ENCODE measurements at regions of chr17 and their contacts with region 1.

Region 1: GRCh38 chr17:48441231-48441711 is 11.3 kb upstream of the SKAP1 start:
- DNase-seq: peak; percentile 96
- H3K4me3 ChIP-seq: peak overlapping the region; percentile 11
- H3K27ac ChIP-seq: peak overlapping the region; percentile 75
- H3K4me1 ChIP-seq: peaks cover 55% of the 10 kb centered on the region
- H3K27me3 ChIP-seq: no peaks in the 10 kb centered on the region
- CTCF ChIP-seq: no peak

Region 2: DNA sequence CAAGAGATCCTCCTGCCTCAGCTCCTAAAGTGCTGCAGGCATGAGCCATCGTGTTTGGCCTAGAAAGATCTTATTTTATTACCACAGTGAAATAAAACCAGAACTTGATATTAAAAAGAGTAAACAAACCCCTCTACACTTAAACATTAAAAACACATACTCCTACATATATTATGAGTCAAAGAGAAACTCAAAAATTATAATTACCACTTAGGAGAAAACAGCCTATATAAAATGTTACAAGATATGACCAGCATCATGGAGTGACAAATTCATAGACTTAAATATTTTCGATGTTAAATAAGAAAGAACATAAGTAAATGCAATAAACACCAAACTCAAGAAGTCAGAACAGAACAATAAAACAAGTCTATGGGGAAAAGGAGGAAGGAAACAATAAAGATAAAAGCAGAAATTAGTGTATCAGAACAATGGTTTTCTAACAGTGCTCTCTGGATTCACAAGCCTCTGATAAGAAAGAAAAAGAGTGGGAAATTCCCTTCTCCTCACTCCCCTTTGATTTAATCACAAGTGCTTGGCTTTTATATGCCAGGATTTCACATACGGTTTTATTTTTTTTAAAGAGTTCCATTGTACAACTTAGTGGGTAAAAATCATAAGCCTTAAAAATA is 34.2 kb before region 1 on chr17:
- CTCF ChIA-PET with region 1: no interaction called
- POLR2A ChIA-PET with region 1: no interaction called
- intact Hi-C with region 1: loop called (anchors 5 kb)
- DNase-seq: peak; percentile 84
- H3K4me3 ChIP-seq: no peak overlapping the region
- H3K27ac ChIP-seq: peak overlapping the region; percentile 22
- H3K4me1 ChIP-seq: peaks cover 10% of the 10 kb centered on the region
- H3K27me3 ChIP-seq: no peaks in the 10 kb centered on the region
- CTCF ChIP-seq: no peak

Region 3: DNA sequence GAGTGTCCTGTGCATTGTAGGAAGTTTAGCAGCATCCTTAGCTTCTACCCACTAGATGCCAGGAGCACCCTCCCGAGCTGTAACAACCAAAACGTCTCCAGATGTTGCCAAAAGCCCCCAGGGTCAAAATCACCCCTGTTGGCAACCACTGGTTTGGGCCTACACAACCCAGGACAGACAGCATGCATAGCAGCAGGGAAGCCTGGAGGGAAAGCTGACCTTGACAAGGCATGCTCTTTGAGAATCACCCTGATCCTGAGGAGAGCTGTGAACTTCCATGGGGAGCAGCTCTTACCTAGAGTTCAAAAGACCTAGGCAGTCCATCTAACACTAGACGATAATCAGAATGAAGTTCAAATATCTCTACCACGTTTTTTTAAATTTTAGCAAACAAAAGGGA is 20.4 kb before region 1 on chr17:
- CTCF ChIA-PET with region 1: no interaction called
- POLR2A ChIA-PET with region 1: no interaction called
- intact Hi-C with region 1: no loop called
- DNase-seq: no peak
- H3K4me3 ChIP-seq: no peak overlapping the region
- H3K27ac ChIP-seq: no peak overlapping the region
- H3K4me1 ChIP-seq: no peaks in the 10 kb centered on the region
- H3K27me3 ChIP-seq: no peaks in the 10 kb centered on the region
- CTCF ChIP-seq: no peak

Region 4: DNA sequence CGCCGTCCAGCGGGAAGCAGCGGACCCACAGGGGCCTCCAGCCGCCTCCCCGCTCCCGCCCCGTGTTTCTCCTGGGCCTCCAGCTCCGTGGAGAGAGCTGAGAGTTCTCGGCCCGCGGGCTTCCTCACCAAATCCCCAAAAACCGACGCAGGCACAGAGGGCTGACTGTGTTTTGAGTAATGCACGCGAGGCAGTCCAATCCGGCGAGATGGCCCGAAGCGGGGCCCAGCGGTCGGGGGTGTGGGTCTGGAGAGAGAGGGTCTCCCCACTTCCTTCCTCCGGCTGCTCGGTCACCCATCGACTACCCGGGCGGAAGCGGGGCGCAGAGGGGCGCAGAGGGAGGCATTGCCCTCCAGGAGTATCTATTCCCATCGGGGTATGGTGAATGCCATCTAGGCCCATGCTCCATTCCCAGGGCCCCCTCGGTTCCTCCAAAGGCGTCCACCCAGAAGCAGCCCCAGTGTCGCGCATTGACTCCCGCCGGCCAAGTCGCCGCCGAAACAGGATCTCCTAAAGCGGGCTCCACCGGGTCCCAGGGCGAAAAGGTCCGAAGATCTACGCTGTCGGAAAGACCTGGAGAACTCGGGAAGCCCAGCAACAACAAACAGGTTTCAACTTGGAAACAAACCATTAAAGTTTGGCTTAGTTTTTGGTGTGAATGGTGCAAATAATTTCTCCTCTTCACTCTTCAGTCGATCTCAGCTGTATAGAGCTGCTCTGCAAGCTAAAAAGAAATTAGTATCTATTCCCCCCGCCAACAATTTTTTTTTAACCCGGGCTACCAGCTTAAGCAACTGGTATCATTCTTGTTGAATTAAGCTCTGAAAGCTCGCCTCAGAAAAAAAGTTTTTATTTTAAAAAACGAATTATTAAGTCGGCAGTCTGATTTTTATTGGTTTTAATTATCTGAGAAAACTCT is 306.4 kb after region 1 on chr17:
- CTCF ChIA-PET with region 1: no interaction called
- POLR2A ChIA-PET with region 1: no interaction called
- intact Hi-C with region 1: loop called (anchors 5 kb)
- DNase-seq: no peak
- H3K4me3 ChIP-seq: no peak overlapping the region
- H3K27ac ChIP-seq: no peak overlapping the region
- H3K4me1 ChIP-seq: no peaks in the 10 kb centered on the region
- H3K27me3 ChIP-seq: no peaks in the 10 kb centered on the region
- CTCF ChIP-seq: no peak